ENCODE measurements at regions of chr17 and their contacts with region 1.

Region 1: GRCh38 chr17:49343273-49343672 is 18.8 kb downstream of the ZNF652 start:
- DNase-seq: no peak
- H3K4me3 Mint-ChIP-seq: peak overlapping the region; percentile 38
- H3K27ac Mint-ChIP-seq: peak overlapping the region; percentile 63
- H3K4me1 Mint-ChIP-seq: peaks cover 62% of the 10 kb centered on the region
- H3K27me3 Mint-ChIP-seq: no peaks in the 10 kb centered on the region

Region 2: GRCh38 chr17:49327835-49328784 is 15.2 kb before region 1 on chr17:
- CTCF ChIA-PET with region 1: interaction called, 3 read pairs
- POLR2A ChIA-PET with region 1: interaction called, 7 read pairs
- intact Hi-C with region 1: loop called (anchors 2 kb)
- DNase-seq: no peak
- H3K4me3 Mint-ChIP-seq: no peak overlapping the region
- H3K27ac Mint-ChIP-seq: peak overlapping the region; percentile 49
- H3K4me1 Mint-ChIP-seq: peaks cover 38% of the 10 kb centered on the region
- H3K27me3 Mint-ChIP-seq: no peaks in the 10 kb centered on the region

Region 3: GRCh38 chr17:49353607-49354006 is 10.3 kb after region 1 on chr17:
- CTCF ChIA-PET with region 1: interaction called, 11 read pairs
- POLR2A ChIA-PET with region 1: interaction called, 26 read pairs
- intact Hi-C with region 1: loop called (anchors 1 kb)
- DNase-seq: no peak
- H3K4me3 Mint-ChIP-seq: no peak overlapping the region
- H3K27ac Mint-ChIP-seq: no peak overlapping the region
- H3K4me1 Mint-ChIP-seq: peaks cover 45% of the 10 kb centered on the region
- H3K27me3 Mint-ChIP-seq: no peaks in the 10 kb centered on the region

Region 4: GRCh38 chr17:49361902-49362722 is 18.8 kb after region 1 on chr17 and contains the start of gene ZNF652:
- CTCF ChIA-PET with region 1: interaction called, 16 read pairs
- POLR2A ChIA-PET with region 1: interaction called, 26 read pairs
- intact Hi-C with region 1: loop called (anchors 1 kb)
- DNase-seq: peak; percentile 94
- H3K4me3 Mint-ChIP-seq: peak within 1 kb of the TSS; percentile 94
- H3K27ac Mint-ChIP-seq: peak within 1 kb of the TSS; percentile 95
- H3K4me1 Mint-ChIP-seq: peaks cover 51% of the 10 kb centered on the region
- H3K27me3 Mint-ChIP-seq: no peaks in the 10 kb centered on the region
- total RNA-seq, gene ZNF652: 5.7 to 7.2 TPM

Region 5: DNA sequence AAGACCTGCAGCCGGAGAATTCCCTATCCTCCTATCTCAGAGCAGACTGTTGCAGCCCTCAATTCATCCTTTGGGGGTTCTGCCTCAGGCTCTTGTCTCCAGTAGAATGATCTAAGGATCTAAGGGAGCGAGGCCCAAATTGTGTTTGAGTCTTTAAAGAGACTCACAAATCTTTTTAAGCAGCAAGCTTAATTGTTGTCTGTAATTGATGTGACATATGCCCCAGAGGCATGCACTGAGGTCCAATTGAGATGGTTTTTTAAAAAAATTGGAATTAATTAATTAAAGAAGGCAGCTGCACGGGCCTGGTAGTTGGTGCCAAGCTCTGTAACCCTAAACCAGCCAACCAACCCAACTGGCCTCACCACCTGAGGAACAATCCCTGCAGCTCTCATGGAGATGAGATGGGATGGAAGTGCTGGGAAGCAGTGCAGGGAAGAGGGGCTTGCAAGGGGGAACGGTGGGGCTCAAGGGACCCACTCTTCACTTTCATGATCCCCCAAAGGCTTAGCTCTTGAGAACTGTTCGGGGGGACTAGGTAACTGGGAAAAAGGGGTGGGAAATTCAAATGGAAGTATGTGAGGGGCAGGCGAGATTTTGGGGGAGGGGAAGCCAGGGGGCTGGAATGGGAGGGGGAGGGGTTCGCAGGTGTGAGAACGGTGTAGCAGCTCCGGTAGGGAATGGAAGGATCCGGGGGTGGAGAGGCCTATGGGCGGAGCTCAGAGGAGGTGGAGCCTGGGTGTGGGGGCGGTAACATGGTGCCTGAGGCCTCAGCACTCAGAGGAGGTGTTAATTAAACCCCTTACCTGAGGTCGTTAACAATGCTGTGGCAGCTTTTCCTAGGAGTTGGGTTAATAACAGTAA is 27.9 kb after region 1 on chr17:
- CTCF ChIA-PET with region 1: interaction called, 17 read pairs
- POLR2A ChIA-PET with region 1: no interaction called
- intact Hi-C with region 1: no loop called
- DNase-seq: no peak
- H3K4me3 Mint-ChIP-seq: no peak overlapping the region
- H3K27ac Mint-ChIP-seq: no peak overlapping the region
- H3K4me1 Mint-ChIP-seq: peaks cover 3% of the 10 kb centered on the region
- H3K27me3 Mint-ChIP-seq: no peaks in the 10 kb centered on the region

Region 6: DNA sequence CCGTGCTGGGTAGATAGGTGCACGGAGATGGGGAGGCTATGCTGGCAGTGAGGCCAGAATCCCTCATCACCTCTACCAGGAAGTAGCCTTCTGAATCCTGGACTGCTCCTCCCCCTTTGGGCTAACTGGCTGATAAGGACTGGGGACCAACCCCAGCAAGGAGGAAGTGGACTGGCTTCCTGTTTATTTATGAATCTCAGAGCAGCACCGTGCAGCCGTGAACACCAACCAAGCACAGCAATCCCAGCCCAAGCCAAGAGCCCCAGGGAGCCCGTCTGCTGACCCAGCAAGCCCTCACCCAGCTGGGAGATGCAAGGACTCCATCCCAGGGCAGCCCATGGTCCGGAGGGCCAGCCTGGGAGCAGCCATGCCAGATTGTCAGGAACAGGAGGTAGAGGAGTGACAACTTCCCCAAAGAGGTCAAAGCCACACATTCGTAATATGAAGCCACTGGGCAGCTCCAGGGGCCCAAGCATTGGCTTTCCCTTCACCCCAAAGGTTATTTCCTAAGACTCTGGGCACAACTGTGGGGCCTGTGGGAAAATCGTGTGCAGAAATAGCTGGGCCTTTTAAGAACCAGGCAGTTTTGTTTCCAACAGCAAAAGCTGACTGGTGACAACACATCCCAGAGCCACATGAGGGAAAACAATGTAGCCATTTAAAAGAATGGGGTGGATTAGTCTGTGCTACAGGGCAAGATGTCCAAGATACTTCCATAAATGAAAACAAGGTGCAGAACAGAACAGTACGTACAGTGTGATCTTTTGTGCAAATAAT is 47.5 kb after region 1 on chr17:
- CTCF ChIA-PET with region 1: interaction called, 3 read pairs
- POLR2A ChIA-PET with region 1: interaction called, 5 read pairs
- intact Hi-C with region 1: loop called (anchors 2 kb)
- DNase-seq: peak; percentile 33
- H3K4me3 Mint-ChIP-seq: no peak overlapping the region
- H3K27ac Mint-ChIP-seq: peak overlapping the region; percentile 71
- H3K4me1 Mint-ChIP-seq: peaks cover 53% of the 10 kb centered on the region
- H3K27me3 Mint-ChIP-seq: no peaks in the 10 kb centered on the region